ENCODE measurements at regions of chrX and their contacts with region 1.

Region 1: DNA sequence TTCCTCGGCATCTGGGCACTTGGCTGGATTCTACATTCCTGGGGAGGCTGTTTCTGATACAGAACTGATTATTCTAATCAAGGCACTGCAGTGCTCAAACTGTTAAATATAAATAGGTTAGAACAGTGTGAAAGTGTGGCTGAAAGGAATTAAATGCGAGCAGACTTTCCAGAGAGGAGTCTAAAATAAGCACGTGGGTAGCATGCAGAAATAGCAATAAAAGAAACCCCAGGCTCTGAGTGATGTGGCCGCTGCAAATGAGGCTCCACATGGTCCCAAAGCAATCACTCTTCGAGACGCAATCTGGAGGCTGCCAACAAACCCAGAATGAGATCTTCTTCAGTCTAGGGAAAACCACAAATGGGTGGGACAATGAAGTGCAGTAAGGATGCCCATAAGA is 30.6 kb upstream of the MTM1 start:
- DNase-seq: no peak
- ATAC-seq: no peak
- H3K4me3 ChIP-seq: no peak overlapping the region
- H3K4me3 Mint-ChIP-seq: no peak overlapping the region
- H3K27ac ChIP-seq: no peak overlapping the region
- H3K27ac Mint-ChIP-seq: no peak overlapping the region
- H3K4me1 ChIP-seq: no peaks in the 10 kb centered on the region
- H3K4me1 Mint-ChIP-seq: no peaks in the 10 kb centered on the region
- H3K27me3 ChIP-seq: no peaks in the 10 kb centered on the region
- H3K27me3 Mint-ChIP-seq: no peaks in the 10 kb centered on the region
- CTCF ChIP-seq: no peak

Region 2: GRCh38 chrX:150525061-150525919 is 12.6 kb before region 1 on chrX:
- CTCF ChIA-PET with region 1: no interaction called
- POLR2A ChIA-PET with region 1: no interaction called
- intact Hi-C with region 1: loop called in 1 of 2 experiments (anchors 1 kb)
- DNase-seq: no peak
- ATAC-seq: no peak
- H3K4me3 ChIP-seq: no peak overlapping the region
- H3K4me3 Mint-ChIP-seq: no peak overlapping the region
- H3K27ac ChIP-seq: no peak overlapping the region
- H3K27ac Mint-ChIP-seq: no peak overlapping the region
- H3K4me1 ChIP-seq: no peaks in the 10 kb centered on the region
- H3K4me1 Mint-ChIP-seq: no peaks in the 10 kb centered on the region
- H3K27me3 ChIP-seq: no peaks in the 10 kb centered on the region
- H3K27me3 Mint-ChIP-seq: no peaks in the 10 kb centered on the region
- CTCF ChIP-seq: no peak